ENCODE measurements at regions of chr6 and their contacts with region 1.

Region 1: GRCh38 chr6:56343295-56343694 is 95.9 kb upstream of the COL21A1 start:
- DNase-seq: no peak
- H3K4me3 Mint-ChIP-seq: no peak overlapping the region
- H3K27ac Mint-ChIP-seq: no peak overlapping the region
- H3K4me1 Mint-ChIP-seq: no peaks in the 10 kb centered on the region
- H3K27me3 Mint-ChIP-seq: peaks cover 4% of the 10 kb centered on the region

Region 2: GRCh38 chr6:56364827-56365313 is 21.6 kb after region 1 on chr6:
- intact Hi-C with region 1: no loop called
- DNase-seq: no peak
- H3K4me3 Mint-ChIP-seq: no peak overlapping the region
- H3K27ac Mint-ChIP-seq: no peak overlapping the region
- H3K4me1 Mint-ChIP-seq: no peaks in the 10 kb centered on the region
- H3K27me3 Mint-ChIP-seq: peaks cover 6% of the 10 kb centered on the region

Region 3: DNA sequence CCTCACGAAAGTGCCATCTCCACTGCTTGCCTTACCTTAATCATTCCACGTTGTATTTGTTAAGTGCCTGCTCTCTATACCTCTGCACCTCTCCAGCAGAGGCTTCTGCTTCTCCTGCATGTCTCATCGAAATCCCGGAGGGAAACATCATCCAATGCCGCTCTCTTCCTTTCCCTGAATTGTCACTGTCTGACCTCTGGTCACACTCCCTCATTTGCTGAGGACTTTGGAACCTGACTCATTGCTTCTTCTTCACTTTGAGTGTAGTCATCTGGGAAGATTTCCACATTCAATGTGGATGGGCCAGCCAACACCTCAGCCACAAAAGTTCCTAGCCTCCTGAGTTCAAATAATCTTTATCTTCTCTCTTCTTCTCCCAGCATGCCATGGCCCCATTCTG is 532.7 kb after region 1 on chr6:
- intact Hi-C with region 1: no loop called
- DNase-seq: no peak
- H3K4me3 Mint-ChIP-seq: no peak overlapping the region
- H3K27ac Mint-ChIP-seq: no peak overlapping the region
- H3K4me1 Mint-ChIP-seq: no peaks in the 10 kb centered on the region
- H3K27me3 Mint-ChIP-seq: peaks cover 13% of the 10 kb centered on the region

Region 4: DNA sequence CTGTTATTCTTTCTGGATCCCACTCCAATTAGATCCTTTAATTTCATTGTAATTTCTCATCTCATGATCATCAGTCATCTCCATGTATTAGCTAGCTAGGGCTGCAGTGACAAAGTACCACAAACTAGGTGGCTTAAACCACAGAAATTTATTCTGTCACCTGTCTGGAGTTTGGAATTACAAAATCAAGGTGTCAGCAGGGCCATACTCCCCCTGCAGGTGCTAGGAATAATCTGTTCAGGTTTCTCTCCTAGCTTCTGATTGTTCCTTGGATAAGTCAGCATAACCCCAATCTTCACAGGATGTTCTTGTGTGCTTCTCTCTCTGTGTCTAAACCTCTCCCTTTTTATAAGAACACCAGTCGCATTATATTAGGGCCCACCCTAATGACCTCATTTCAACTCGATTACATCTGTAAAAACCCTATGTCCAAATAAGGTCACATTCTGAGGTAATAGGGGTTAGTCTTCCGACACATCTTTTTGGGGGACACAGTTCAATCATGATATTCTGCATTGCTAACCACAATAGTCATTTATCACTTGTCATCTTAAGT is 652.1 kb after region 1 on chr6:
- intact Hi-C with region 1: loop called (anchors 5 kb)
- DNase-seq: no peak
- H3K4me3 Mint-ChIP-seq: no peak overlapping the region
- H3K27ac Mint-ChIP-seq: no peak overlapping the region
- H3K4me1 Mint-ChIP-seq: no peaks in the 10 kb centered on the region
- H3K27me3 Mint-ChIP-seq: peaks cover 13% of the 10 kb centered on the region

Measured in activated T-helper 1 cell treated with anti-CD3 and anti-CD28 coated beads, Interleukin-12 subunit alpha, Interleukin-12 subunit beta, Interleukin-2, Interleukin-4 antibody, amounts not matched to agents 30 ng/mL and 10 ng/mL and 1 ng/mL, durations not matched to agents 14 hours and 24 hours and 36 hours (primary cell).